PC-3 (cell line): ENCODE measurements at regions of chr1 and their contacts with region 1.

Region 1: DNA sequence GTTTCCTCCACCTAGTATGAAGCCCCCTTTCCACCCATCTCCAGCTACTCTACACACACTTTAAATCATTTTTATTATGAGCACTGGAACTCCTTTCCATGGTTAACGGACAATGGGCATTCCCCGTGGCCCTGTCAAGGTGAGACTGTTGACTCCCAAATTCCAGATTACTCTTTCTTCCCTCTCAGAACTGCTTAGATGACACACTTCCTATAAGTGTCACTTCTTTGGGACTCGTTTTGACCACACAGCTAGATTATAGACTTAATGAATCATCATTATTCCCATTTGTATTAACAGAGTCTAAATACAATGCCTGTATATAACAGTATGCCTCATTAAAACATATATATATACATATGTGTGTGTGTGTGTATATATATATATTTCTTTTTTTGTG is 215.1 kb downstream of the BRINP3 start:
- DNase-seq: peak; percentile 55
- ATAC-seq: peak; percentile 76
- H3K4me3 ChIP-seq: no peak overlapping the region
- H3K27ac ChIP-seq: no peak overlapping the region
- H3K4me1 ChIP-seq: no peaks in the 10 kb centered on the region
- H3K27me3 ChIP-seq: peaks cover 23% of the 10 kb centered on the region; the same call in 1 of the 2 replicates
- CTCF ChIP-seq: no peak

Region 2: GRCh38 chr1:190296452-190296851 is 33.9 kb after region 1 on chr1:
- CTCF ChIA-PET with region 1: no interaction called
- POLR2A ChIA-PET with region 1: no interaction called
- intact Hi-C with region 1: loop called (anchors 1 kb)
- DNase-seq: no peak
- ATAC-seq: no peak
- H3K4me3 ChIP-seq: no peak overlapping the region
- H3K27ac ChIP-seq: no peak overlapping the region
- H3K4me1 ChIP-seq: no peaks in the 10 kb centered on the region
- H3K27me3 ChIP-seq: peaks cover 4% of the 10 kb centered on the region; the same call in 1 of the 2 replicates
- CTCF ChIP-seq: no peak

Region 3: DNA sequence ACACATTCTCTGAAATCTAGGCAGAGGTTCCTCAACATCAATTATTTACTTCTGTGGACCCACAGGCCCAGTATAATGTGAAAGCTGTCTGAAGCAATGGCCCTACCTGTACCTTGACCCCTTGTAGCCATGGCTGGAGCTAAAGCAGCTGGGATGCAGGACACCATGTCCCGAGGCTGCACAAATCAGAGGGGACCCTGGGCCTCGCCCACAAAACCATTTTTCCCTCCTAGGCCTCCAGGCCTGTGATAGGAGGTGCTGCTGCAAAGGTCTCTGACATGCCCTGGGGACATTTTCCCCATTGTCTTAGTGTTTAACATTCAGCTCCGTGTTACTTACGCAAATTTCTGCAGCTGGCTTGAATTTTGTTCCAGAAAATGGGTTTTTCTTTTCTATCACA is 104.7 kb after region 1 on chr1:
- CTCF ChIA-PET with region 1: no interaction called
- POLR2A ChIA-PET with region 1: no interaction called
- intact Hi-C with region 1: no loop called
- DNase-seq: no peak
- ATAC-seq: no peak
- H3K4me3 ChIP-seq: no peak overlapping the region
- H3K27ac ChIP-seq: no peak overlapping the region
- H3K4me1 ChIP-seq: no peaks in the 10 kb centered on the region
- H3K27me3 ChIP-seq: peaks cover 7% of the 10 kb centered on the region
- CTCF ChIP-seq: no peak